ENCODE measurements at regions of chr1 and their contacts with region 1.

Region 1: DNA sequence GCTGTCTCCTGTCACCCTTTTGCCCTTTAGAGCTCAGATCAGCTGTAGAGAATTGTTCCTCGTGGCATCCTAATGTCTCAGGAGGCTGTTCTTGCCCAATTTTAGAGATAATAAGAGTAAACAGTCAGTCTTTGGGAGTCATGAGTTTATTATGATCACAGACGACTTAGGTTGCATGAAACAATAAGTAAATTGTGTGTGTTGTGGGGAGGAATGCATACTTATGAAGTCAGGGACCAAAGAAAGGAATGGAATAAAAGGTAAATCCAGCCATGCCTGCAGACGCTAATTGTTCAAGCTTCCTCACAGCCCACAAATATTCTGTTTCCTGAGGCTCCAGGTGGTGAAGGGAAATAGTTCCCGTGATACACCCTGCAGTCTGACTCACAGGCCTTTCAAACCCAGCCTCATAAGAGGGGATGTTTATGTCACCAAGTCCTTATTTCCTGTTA is 897 bp downstream of the EPHX4 start:
- DNase-seq: no peak
- H3K4me3 ChIP-seq: peak overlapping the region in 2 of 3 donors; percentile 58 to 82
- H3K27ac ChIP-seq: no peak overlapping the region
- H3K4me1 ChIP-seq: no peaks in the 10 kb centered on the region
- H3K27me3 ChIP-seq: no peaks in the 10 kb centered on the region
- CTCF ChIP-seq: no peak
- POLR2A ChIP-seq: no peak

Region 2: GRCh38 chr1:90925928-90926869 is 1104.5 kb before region 1 on chr1:
- intact Hi-C with region 1: no loop called
- DNase-seq: no peak
- H3K4me3 ChIP-seq: no peak overlapping the region
- H3K27ac ChIP-seq: no peak overlapping the region
- H3K4me1 ChIP-seq: peaks cover 0 to 6% of the 10 kb centered on the region in 2 donors
- H3K27me3 ChIP-seq: no peaks in the 10 kb centered on the region
- CTCF ChIP-seq: no peak
- POLR2A ChIP-seq: no peak

Region 3: GRCh38 chr1:91714867-91715381 is 315.8 kb before region 1 on chr1:
- intact Hi-C with region 1: loop called (anchors 5 kb)
- DNase-seq: no peak
- H3K4me3 ChIP-seq: no peak overlapping the region
- H3K27ac ChIP-seq: no peak overlapping the region
- H3K4me1 ChIP-seq: no peaks in the 10 kb centered on the region
- H3K27me3 ChIP-seq: no peaks in the 10 kb centered on the region
- CTCF ChIP-seq: no peak
- POLR2A ChIP-seq: no peak

Region 4: DNA sequence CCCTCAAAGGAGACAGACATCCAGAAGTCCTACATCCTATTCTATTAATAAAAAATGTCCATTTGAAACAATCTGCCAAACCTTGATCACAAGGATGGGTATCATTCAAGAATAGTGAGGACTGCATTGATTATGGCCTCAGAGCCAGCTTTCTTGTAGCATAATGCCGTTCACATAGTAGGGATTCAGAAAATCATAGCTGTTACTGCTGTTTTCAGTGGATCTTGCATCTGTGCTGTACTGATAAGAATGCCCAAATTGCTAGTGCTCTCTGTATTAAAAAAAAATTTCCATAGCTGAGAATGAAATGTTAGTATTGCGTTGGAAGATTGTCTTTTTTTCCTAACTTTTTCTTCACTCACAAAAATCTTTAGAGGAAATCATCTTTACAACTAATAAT is 62.3 kb before region 1 on chr1:
- intact Hi-C with region 1: no loop called
- DNase-seq: no peak
- H3K4me3 ChIP-seq: no peak overlapping the region
- H3K27ac ChIP-seq: no peak overlapping the region
- H3K4me1 ChIP-seq: no peaks in the 10 kb centered on the region
- H3K27me3 ChIP-seq: no peaks in the 10 kb centered on the region
- CTCF ChIP-seq: no peak
- POLR2A ChIP-seq: no peak

Region 5: GRCh38 chr1:92343061-92343460 is 312.4 kb after region 1 on chr1:
- intact Hi-C with region 1: no loop called
- DNase-seq: no peak
- H3K4me3 ChIP-seq: no peak overlapping the region
- H3K27ac ChIP-seq: no peak overlapping the region
- H3K4me1 ChIP-seq: no peaks in the 10 kb centered on the region
- H3K27me3 ChIP-seq: no peaks in the 10 kb centered on the region
- CTCF ChIP-seq: no peak
- POLR2A ChIP-seq: no peak

Region 6: GRCh38 chr1:92792340-92792782 is 761.7 kb after region 1 on chr1:
- intact Hi-C with region 1: no loop called
- DNase-seq: no peak
- H3K4me3 ChIP-seq: no peak overlapping the region
- H3K27ac ChIP-seq: no peak overlapping the region
- H3K4me1 ChIP-seq: no peaks in the 10 kb centered on the region
- H3K27me3 ChIP-seq: no peaks in the 10 kb centered on the region
- CTCF ChIP-seq: no peak
- POLR2A ChIP-seq: no peak

Measured in breast epithelium (tissue), 4 donors.